ENCODE measurements at regions of chr15 and their contacts with region 1.

Region 1: GRCh38 chr15:33201491-33202231 is 7.1 kb upstream of the FMN1 start:
- DNase-seq: peak; percentile 84
- H3K4me3 Mint-ChIP-seq: peak overlapping the region; percentile 71
- H3K27ac Mint-ChIP-seq: peak overlapping the region; percentile 47
- H3K4me1 Mint-ChIP-seq: peaks cover 20% of the 10 kb centered on the region
- H3K27me3 Mint-ChIP-seq: no peaks in the 10 kb centered on the region
- CTCF ChIP-seq: peak; percentile 36

Region 2: DNA sequence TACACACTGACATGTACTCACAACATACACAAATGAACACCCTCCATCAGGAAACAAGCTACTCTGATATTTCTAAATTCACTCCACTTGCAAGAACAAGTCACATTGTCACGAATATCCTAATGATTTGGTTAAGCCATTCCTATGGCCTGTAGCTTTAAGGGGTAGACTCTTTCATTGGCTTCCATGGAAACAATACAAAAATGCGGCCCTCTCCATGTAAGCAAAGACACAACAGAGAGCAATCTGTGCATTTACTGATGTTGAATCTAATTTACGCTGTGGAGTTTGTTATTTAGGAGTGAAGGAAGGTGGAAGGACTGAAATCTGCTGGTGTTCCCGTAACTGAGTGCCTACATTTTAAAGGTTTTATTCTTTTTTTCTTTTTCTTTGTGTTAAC is 121.7 kb before region 1 on chr15:
- CTCF ChIA-PET with region 1: no interaction called
- POLR2A ChIA-PET with region 1: no interaction called
- intact Hi-C with region 1: no loop called
- DNase-seq: no peak
- H3K4me3 Mint-ChIP-seq: no peak overlapping the region
- H3K27ac Mint-ChIP-seq: no peak overlapping the region
- H3K4me1 Mint-ChIP-seq: no peaks in the 10 kb centered on the region
- H3K27me3 Mint-ChIP-seq: no peaks in the 10 kb centered on the region
- CTCF ChIP-seq: no peak

Region 3: GRCh38 chr15:33142708-33143107 is 59.0 kb before region 1 on chr15:
- CTCF ChIA-PET with region 1: no interaction called
- POLR2A ChIA-PET with region 1: interaction called, 10 read pairs
- intact Hi-C with region 1: no loop called
- DNase-seq: no peak
- H3K4me3 Mint-ChIP-seq: no peak overlapping the region
- H3K27ac Mint-ChIP-seq: no peak overlapping the region
- H3K4me1 Mint-ChIP-seq: peaks cover 17% of the 10 kb centered on the region
- H3K27me3 Mint-ChIP-seq: no peaks in the 10 kb centered on the region
- CTCF ChIP-seq: no peak

Region 4: GRCh38 chr15:33152502-33153109 is 49.1 kb before region 1 on chr15:
- CTCF ChIA-PET with region 1: interaction called, 5 read pairs
- POLR2A ChIA-PET with region 1: interaction called, 16 read pairs
- intact Hi-C with region 1: no loop called
- DNase-seq: peak; percentile 55
- H3K4me3 Mint-ChIP-seq: no peak overlapping the region
- H3K27ac Mint-ChIP-seq: no peak overlapping the region
- H3K4me1 Mint-ChIP-seq: peaks cover 14% of the 10 kb centered on the region
- H3K27me3 Mint-ChIP-seq: no peaks in the 10 kb centered on the region
- CTCF ChIP-seq: no peak

Region 5: GRCh38 chr15:33215941-33216872 is 14.5 kb after region 1 on chr15:
- CTCF ChIA-PET with region 1: interaction called, 21 read pairs
- POLR2A ChIA-PET with region 1: interaction called, 4 read pairs
- intact Hi-C with region 1: no loop called
- DNase-seq: peak; percentile 53
- H3K4me3 Mint-ChIP-seq: no peak overlapping the region
- H3K27ac Mint-ChIP-seq: no peak overlapping the region
- H3K4me1 Mint-ChIP-seq: peaks cover 4% of the 10 kb centered on the region
- H3K27me3 Mint-ChIP-seq: no peaks in the 10 kb centered on the region
- CTCF ChIP-seq: peak; percentile 47

Region 6: GRCh38 chr15:33322091-33322490 is 120.4 kb after region 1 on chr15:
- CTCF ChIA-PET with region 1: no interaction called
- POLR2A ChIA-PET with region 1: no interaction called
- intact Hi-C with region 1: no loop called
- DNase-seq: no peak
- H3K4me3 Mint-ChIP-seq: no peak overlapping the region
- H3K27ac Mint-ChIP-seq: no peak overlapping the region
- H3K4me1 Mint-ChIP-seq: no peaks in the 10 kb centered on the region
- H3K27me3 Mint-ChIP-seq: peaks cover 89% of the 10 kb centered on the region
- CTCF ChIP-seq: no peak